HAP-1 (cell line): ENCODE measurements at regions of chr18 and their contacts with region 1.

Region 1: GRCh38 chr18:62186774-62187542 is at the starts of genes PIGN and RELCH:
- DNase-seq: peak; percentile 97 to 98
- H3K4me3 ChIP-seq: peak within 1 kb of the TSS; percentile 93
- H3K4me1 ChIP-seq: peaks cover 24% of the 10 kb centered on the region
- H3K27me3 ChIP-seq: no peaks in the 10 kb centered on the region

Region 2: GRCh38 chr18:62242955-62243354 is 56.0 kb after region 1 on chr18:
- in situ Hi-C with region 1: loop called (anchors 5 kb)
- DNase-seq: no peak
- H3K4me3 ChIP-seq: no peak overlapping the region
- H3K4me1 ChIP-seq: no peaks in the 10 kb centered on the region
- H3K27me3 ChIP-seq: no peaks in the 10 kb centered on the region

Region 3: GRCh38 chr18:62300359-62300963 is 113.5 kb after region 1 on chr18:
- in situ Hi-C with region 1: no loop called
- DNase-seq: no peak
- H3K4me3 ChIP-seq: no peak overlapping the region
- H3K4me1 ChIP-seq: no peaks in the 10 kb centered on the region
- H3K27me3 ChIP-seq: no peaks in the 10 kb centered on the region

Region 4: DNA sequence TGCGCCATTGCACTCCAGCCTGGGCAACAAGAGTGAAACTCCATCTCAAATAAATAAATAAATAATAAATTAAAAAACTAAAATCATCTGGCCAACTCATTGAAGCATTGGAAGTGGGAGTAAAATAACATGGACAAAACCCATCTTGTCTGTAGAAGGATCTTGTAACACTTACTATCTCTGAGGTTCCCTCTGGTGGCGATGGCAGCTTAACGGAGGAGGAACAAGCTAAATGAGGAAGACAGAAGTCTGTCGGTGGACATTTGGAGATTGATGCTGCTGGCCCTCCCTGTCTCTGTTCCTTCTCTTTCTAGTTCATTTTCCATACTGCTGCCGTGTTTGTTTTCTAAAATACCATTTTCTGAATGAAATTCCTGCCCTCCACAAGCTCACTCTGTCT is 379.2 kb after region 1 on chr18:
- in situ Hi-C with region 1: loop called (anchors 25 kb)
- DNase-seq: no peak
- H3K4me3 ChIP-seq: no peak overlapping the region
- H3K4me1 ChIP-seq: no peaks in the 10 kb centered on the region
- H3K27me3 ChIP-seq: no peaks in the 10 kb centered on the region

Region 5: DNA sequence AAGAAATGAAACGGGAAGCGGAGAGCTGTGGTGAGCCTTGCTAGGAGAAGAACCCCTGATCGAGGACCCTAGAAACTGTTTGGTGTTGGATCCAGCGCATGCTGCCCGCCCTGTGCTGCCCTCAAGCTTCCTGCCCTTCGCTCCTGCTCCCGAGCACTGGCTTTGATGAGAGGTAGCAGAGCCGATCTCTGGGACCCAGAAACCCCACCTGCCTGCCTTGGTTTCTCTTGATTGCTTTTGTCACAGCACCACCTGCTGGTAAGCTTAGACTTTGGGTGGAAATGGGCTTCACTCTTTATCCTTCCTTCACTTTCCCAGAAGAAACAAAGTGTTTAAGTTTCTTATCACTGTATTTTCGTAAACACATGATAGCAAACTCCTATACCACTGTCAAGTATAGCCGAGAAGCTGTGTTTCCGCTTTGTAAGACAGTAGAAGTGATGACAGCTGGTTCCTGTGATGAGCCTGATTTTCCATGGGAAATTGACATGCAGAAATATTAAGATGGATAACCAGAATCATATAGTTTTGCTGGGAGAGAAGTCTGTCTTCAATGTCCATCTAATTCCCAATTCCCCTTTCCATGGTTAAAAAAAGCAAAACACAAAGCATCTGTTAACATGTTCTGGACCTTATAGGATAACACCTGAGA is 795.8 kb after region 1 on chr18:
- in situ Hi-C with region 1: loop called (anchors 25 kb)
- DNase-seq: peak; percentile 69 to 82
- H3K4me3 ChIP-seq: no peak overlapping the region
- H3K4me1 ChIP-seq: no peaks in the 10 kb centered on the region; the same call in none of the 2 replicates
- H3K27me3 ChIP-seq: no peaks in the 10 kb centered on the region